CD4-positive, alpha-beta T cell (primary cell): ENCODE measurements at regions of chr2 and their contacts with region 1.

Region 1: GRCh38 chr2:126527836-126528507 is 128.0 kb upstream of the GYPC start:
- DNase-seq: peak; percentile 54 to 83 (median 68)
- ATAC-seq: peak; percentile 68
- H3K4me3 ChIP-seq: no peak overlapping the region
- H3K4me3 Mint-ChIP-seq: no peak overlapping the region
- H3K27ac ChIP-seq: no peak overlapping the region
- H3K27ac Mint-ChIP-seq: no peak overlapping the region
- H3K4me1 ChIP-seq: no peaks in the 10 kb centered on the region
- H3K4me1 Mint-ChIP-seq: no peaks in the 10 kb centered on the region
- H3K27me3 ChIP-seq: no peaks in the 10 kb centered on the region
- H3K27me3 Mint-ChIP-seq: no peaks in the 10 kb centered on the region
- CTCF ChIP-seq: peak; percentile 83

Region 2: DNA sequence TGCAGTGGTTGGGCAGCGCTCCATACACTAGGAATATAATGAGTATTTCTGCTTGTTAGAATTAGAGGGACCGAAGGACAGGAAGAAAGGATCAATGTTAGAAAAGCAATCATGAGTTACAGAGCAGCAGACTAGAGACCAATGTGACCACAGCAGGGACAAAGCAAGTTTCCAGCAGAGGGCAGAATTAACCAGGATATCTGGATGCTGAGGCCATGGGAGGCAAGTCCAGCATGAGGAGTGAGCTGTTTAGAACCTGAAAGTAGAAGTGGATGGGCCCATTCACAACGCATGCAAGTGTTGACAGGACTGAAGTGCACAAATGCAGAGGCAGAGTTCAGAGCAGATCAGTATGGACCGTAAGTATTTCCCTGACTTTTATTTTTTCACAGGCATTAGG is 782.5 kb before region 1 on chr2:
- CTCF ChIA-PET with region 1: no interaction called
- POLR2A ChIA-PET with region 1: no interaction called
- intact Hi-C with region 1: no loop called
- DNase-seq: peak in 1 of 14 experiments; percentile 1
- ATAC-seq: no peak
- H3K4me3 ChIP-seq: no peak overlapping the region
- H3K4me3 Mint-ChIP-seq: no peak overlapping the region
- H3K27ac ChIP-seq: no peak overlapping the region
- H3K27ac Mint-ChIP-seq: no peak overlapping the region
- H3K4me1 ChIP-seq: no peaks in the 10 kb centered on the region
- H3K4me1 Mint-ChIP-seq: no peaks in the 10 kb centered on the region
- H3K27me3 ChIP-seq: no peaks in the 10 kb centered on the region
- H3K27me3 Mint-ChIP-seq: no peaks in the 10 kb centered on the region
- CTCF ChIP-seq: no peak

Region 3: DNA sequence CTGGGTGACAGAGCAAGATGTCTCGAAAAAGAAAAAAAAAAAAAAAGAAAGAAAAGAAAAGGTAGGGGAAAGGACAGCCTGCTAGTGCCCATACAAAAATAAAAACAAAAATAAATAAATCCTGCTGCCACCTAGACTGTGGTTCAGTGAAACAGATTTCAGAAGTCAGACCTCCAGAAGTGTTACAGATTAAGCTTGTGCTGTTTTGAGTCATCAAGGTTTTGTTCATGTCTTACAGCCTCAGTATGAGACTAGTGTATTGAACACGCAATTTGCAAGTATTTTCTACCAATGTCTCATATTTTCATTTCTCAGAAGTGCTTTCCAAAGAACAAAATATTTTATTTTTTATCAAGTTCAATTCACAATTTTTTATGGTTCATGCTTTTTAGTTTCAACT is 592.4 kb before region 1 on chr2:
- CTCF ChIA-PET with region 1: no interaction called
- POLR2A ChIA-PET with region 1: no interaction called
- intact Hi-C with region 1: no loop called
- DNase-seq: no peak
- ATAC-seq: no peak
- H3K4me3 ChIP-seq: no peak overlapping the region
- H3K4me3 Mint-ChIP-seq: no peak overlapping the region
- H3K27ac ChIP-seq: no peak overlapping the region
- H3K27ac Mint-ChIP-seq: no peak overlapping the region
- H3K4me1 ChIP-seq: no peaks in the 10 kb centered on the region
- H3K4me1 Mint-ChIP-seq: no peaks in the 10 kb centered on the region
- H3K27me3 ChIP-seq: no peaks in the 10 kb centered on the region
- H3K27me3 Mint-ChIP-seq: no peaks in the 10 kb centered on the region
- CTCF ChIP-seq: no peak

Region 4: DNA sequence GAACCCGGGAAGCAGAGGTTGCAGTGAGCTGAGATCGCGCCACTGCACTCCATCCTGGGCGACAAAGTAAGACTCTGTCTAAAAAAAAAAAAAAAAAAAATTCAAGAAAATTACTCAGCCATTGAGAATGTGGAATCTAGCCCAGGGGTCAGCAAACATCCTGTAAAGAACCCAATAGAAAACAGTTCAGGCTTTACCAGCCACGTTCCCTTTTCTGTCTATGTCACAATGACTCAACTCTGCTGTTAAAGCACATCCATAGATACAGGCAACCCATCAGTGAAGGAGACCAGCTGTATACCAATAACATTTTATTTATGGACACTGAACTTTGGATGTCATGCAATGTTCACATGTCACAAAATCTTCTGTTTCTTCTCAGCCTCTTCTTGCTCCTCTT is 307.6 kb before region 1 on chr2:
- CTCF ChIA-PET with region 1: no interaction called
- POLR2A ChIA-PET with region 1: no interaction called
- intact Hi-C with region 1: no loop called
- DNase-seq: no peak
- ATAC-seq: no peak
- H3K4me3 ChIP-seq: no peak overlapping the region
- H3K4me3 Mint-ChIP-seq: no peak overlapping the region
- H3K27ac ChIP-seq: no peak overlapping the region
- H3K27ac Mint-ChIP-seq: no peak overlapping the region
- H3K4me1 ChIP-seq: no peaks in the 10 kb centered on the region
- H3K4me1 Mint-ChIP-seq: no peaks in the 10 kb centered on the region
- H3K27me3 ChIP-seq: peaks cover 0 to 2% of the 10 kb centered on the region in 2 experiments
- H3K27me3 Mint-ChIP-seq: no peaks in the 10 kb centered on the region
- CTCF ChIP-seq: no peak

Region 5: DNA sequence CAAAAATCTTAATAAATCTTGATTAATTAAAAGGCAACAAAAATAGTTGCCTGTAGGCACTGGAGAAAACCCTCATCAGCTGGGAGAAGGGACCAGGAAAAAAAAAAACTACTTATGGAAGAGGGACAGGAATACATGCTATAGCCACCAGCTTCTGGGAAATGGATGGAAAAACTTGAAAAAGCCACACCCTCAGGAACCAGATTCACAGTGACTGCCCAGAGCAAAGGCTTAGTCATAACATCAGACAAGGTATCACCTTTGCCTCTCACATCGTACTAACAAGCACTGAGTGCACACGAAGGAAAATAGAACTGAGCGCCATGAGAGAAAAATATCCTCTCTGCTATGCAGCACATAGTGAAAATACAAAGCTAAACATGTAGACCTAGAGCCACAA is 11.1 kb after region 1 on chr2:
- CTCF ChIA-PET with region 1: no interaction called
- POLR2A ChIA-PET with region 1: no interaction called
- intact Hi-C with region 1: no loop called
- DNase-seq: no peak
- ATAC-seq: no peak
- H3K4me3 ChIP-seq: no peak overlapping the region
- H3K4me3 Mint-ChIP-seq: no peak overlapping the region
- H3K27ac ChIP-seq: no peak overlapping the region
- H3K27ac Mint-ChIP-seq: no peak overlapping the region
- H3K4me1 ChIP-seq: no peaks in the 10 kb centered on the region
- H3K4me1 Mint-ChIP-seq: peaks cover 5% of the 10 kb centered on the region
- H3K27me3 ChIP-seq: peaks cover 0 to 10% of the 10 kb centered on the region in 2 experiments
- H3K27me3 Mint-ChIP-seq: peaks cover 33% of the 10 kb centered on the region
- CTCF ChIP-seq: no peak

Region 6: DNA sequence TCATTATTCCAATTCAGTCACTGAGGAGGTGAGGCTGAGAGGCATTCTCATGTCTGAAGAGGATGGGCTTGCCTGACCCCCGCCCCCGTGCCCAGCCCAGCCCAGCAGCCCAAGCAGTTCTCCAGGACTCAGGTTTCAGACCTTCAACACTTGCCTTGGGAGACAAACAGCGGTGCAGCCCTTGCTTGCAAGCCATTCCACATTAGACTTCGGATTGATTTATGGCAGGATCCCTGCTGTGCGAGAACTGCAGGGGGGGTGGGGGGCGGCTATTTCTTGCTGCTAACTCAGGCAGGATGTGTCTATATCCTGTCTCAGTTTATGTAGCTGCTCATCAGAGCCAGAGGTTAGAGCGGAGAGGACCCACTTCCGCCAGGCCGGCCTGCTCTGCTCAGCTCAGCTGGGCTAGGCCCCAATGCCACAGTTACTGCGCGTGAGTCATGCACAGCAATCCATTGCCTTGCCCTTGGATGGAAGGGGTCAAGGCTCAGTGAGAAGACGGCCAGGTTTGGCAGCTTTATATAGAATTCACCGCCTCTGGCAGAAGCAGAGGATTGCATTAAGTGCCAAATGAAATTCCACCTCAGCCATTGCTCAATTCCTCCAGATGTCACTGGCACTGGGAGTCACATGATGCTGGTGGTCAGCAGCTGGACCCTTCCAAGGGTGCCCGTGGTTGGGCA is 129.8 kb after region 1 on chr2:
- CTCF ChIA-PET with region 1: interaction called, 3 read pairs
- POLR2A ChIA-PET with region 1: interaction called, 4 read pairs
- intact Hi-C with region 1: loop called (anchors 5 kb)
- DNase-seq: peak; percentile 50 to 90 (median 74)
- ATAC-seq: peak; percentile 59
- H3K4me3 ChIP-seq: peak overlapping the region; percentile 86
- H3K4me3 Mint-ChIP-seq: peak overlapping the region; percentile 100
- H3K27ac ChIP-seq: peak overlapping the region; percentile 80 to 81
- H3K27ac Mint-ChIP-seq: peak overlapping the region; percentile 98
- H3K4me1 ChIP-seq: peaks cover 66% of the 10 kb centered on the region
- H3K4me1 Mint-ChIP-seq: peaks cover 78% of the 10 kb centered on the region
- H3K27me3 ChIP-seq: no peaks in the 10 kb centered on the region
- H3K27me3 Mint-ChIP-seq: no peaks in the 10 kb centered on the region
- CTCF ChIP-seq: no peak

Region 7: DNA sequence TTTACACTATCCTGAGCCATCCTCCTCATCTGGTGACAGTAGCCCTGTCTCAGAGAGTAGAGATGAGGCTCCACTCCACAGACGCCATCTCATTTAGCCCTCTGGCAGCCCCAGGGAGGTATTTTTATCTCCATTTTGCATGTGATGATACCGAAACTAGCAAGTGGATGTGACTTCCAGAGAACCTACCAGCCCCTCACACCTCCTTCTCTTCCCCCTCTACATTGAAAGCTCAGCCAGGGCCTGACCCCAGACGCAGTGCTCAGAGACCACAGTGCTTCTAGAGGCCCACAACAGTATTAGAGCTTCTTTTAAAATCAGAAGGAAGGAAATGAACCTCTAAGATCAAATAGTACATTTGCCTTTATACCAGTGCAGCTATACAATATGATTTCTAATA is 136.3 kb after region 1 on chr2:
- CTCF ChIA-PET with region 1: interaction called, 3 read pairs
- POLR2A ChIA-PET with region 1: interaction called, 4 read pairs
- intact Hi-C with region 1: loop called (anchors 5 kb)
- DNase-seq: peak in 5 of 14 experiments; percentile 8 to 60 (median 43)
- ATAC-seq: peak; percentile 41
- H3K4me3 ChIP-seq: peak overlapping the region; percentile 9
- H3K4me3 Mint-ChIP-seq: peak overlapping the region; percentile 78
- H3K27ac ChIP-seq: peak overlapping the region; percentile 67 to 81
- H3K27ac Mint-ChIP-seq: peak overlapping the region; percentile 98
- H3K4me1 ChIP-seq: peaks cover 81% of the 10 kb centered on the region
- H3K4me1 Mint-ChIP-seq: peaks cover 96% of the 10 kb centered on the region
- H3K27me3 ChIP-seq: no peaks in the 10 kb centered on the region
- H3K27me3 Mint-ChIP-seq: no peaks in the 10 kb centered on the region
- CTCF ChIP-seq: no peak

Region 8: GRCh38 chr2:126749537-126749936 is 221.6 kb after region 1 on chr2:
- CTCF ChIA-PET with region 1: no interaction called
- POLR2A ChIA-PET with region 1: no interaction called
- intact Hi-C with region 1: loop called in 1 of 2 experiments (anchors 1 kb)
- DNase-seq: peak in 4 of 14 experiments; percentile 11 to 28 (median 17)
- ATAC-seq: no peak
- H3K4me3 ChIP-seq: no peak overlapping the region
- H3K4me3 Mint-ChIP-seq: no peak overlapping the region
- H3K27ac ChIP-seq: no peak overlapping the region
- H3K27ac Mint-ChIP-seq: no peak overlapping the region
- H3K4me1 ChIP-seq: peaks cover 5% of the 10 kb centered on the region
- H3K4me1 Mint-ChIP-seq: peaks cover 15% of the 10 kb centered on the region
- H3K27me3 ChIP-seq: no peaks in the 10 kb centered on the region
- H3K27me3 Mint-ChIP-seq: no peaks in the 10 kb centered on the region
- CTCF ChIP-seq: peak; percentile 29

Region 9: DNA sequence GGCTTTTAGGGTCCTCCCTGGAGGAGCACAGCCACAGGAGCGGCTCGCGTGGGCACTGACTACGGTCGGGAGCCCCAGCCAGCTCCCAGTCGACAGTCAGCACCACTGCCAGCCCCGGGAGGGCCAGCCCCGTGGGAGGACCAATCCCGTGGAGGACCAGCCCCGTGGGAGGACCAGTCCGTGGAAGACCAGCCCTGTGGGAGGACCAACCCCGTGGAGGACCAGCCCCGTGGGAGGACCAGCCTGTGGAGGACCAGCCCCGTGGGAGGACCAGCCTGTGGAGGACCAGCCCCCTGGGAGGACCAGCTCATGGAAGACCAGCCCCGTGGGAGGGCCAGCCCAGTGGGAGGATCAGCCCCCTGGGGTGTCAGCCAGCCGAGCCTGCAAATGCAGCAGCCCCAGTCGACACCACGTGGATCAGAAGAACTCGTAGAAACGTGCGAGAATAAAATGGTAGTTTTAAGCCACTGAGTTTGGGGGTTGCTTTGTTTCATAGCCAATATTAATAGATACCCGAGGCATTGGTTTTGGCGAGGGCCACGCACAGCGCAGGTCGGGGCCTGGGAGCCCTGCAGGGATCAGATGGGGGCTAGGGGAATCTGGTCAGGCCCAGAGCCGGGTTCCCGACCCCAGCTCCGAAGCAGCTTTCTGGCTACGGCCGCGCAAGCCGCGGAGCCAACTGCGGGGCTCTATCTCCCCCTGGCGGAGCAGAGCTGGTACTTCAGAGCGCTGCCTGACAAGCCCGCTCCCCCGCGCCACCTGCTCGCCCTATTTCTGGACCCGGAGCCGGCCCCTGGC is 443.7 kb after region 1 on chr2:
- CTCF ChIA-PET with region 1: interaction called, 7 read pairs
- POLR2A ChIA-PET with region 1: no interaction called
- intact Hi-C with region 1: loop called (anchors 2 to 5 kb)
- DNase-seq: peak; percentile 45 to 79 (median 54)
- ATAC-seq: peak; percentile 94
- H3K4me3 ChIP-seq: peak overlapping the region; percentile 43
- H3K4me3 Mint-ChIP-seq: peak overlapping the region; percentile 74
- H3K27ac ChIP-seq: no peak overlapping the region
- H3K27ac Mint-ChIP-seq: no peak overlapping the region
- H3K4me1 ChIP-seq: peaks cover 14% of the 10 kb centered on the region
- H3K4me1 Mint-ChIP-seq: no peaks in the 10 kb centered on the region
- H3K27me3 ChIP-seq: peaks cover 21 to 53% of the 10 kb centered on the region in 2 experiments
- H3K27me3 Mint-ChIP-seq: peaks cover 54% of the 10 kb centered on the region
- CTCF ChIP-seq: peak; percentile 92

Region 10: DNA sequence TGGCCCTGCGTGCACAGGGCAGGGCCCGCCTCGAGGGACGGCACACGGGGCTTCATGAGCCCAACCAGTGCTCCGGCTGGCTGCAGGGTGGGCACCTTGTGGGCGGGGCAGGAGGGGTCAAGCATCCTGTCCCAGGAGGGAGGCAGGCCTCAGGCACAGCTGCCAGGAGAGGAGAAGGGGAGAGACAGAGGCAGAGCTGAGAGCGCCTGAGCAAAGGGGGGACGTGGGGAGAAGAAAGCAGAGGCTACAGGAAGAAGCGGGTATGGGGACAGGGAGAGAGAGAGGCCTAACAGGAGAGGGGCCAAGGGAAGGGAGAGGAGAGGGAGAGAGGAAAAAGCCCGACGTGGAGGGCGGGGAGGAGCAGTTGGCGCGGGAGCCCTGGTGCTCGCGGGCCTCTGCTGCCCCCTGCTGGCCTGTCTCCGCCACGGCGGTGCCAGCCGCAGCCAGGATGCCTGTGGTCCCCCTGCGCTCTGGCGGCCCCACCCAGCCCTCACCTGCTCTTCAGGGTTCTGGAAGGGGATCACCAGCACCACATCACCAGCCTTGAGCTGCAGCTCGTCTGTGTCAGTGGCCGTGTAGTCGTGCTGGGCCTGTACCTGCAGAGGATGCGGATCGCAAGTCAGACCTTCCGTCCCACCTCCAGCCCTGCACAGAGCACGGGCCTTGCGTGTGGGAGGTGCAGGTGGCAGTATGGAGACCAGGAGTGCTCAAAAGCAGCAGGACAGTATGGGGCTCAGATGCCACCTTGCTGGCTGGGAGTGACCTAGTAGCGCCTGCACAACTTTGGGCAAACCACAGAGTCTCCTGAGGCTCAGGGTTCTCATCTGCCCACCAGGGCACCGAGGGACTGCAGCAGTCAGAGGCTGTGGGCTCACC is 522.2 kb after region 1 on chr2:
- CTCF ChIA-PET with region 1: no interaction called
- POLR2A ChIA-PET with region 1: no interaction called
- intact Hi-C with region 1: loop called in 1 of 2 experiments (anchors 5 kb)
- DNase-seq: peak in 13 of 14 experiments; percentile 39 to 79 (median 55)
- ATAC-seq: peak; percentile 81
- H3K4me3 ChIP-seq: no peak overlapping the region
- H3K4me3 Mint-ChIP-seq: no peak overlapping the region
- H3K27ac ChIP-seq: no peak overlapping the region
- H3K27ac Mint-ChIP-seq: peak overlapping the region; percentile 36
- H3K4me1 ChIP-seq: peaks cover 14% of the 10 kb centered on the region
- H3K4me1 Mint-ChIP-seq: no peaks in the 10 kb centered on the region
- H3K27me3 ChIP-seq: no peaks in the 10 kb centered on the region
- H3K27me3 Mint-ChIP-seq: no peaks in the 10 kb centered on the region
- CTCF ChIP-seq: peak; percentile 86